Left colon (tissue), 2 donors: ENCODE measurements at regions of chr12 and their contacts with region 1.

Region 1: DNA sequence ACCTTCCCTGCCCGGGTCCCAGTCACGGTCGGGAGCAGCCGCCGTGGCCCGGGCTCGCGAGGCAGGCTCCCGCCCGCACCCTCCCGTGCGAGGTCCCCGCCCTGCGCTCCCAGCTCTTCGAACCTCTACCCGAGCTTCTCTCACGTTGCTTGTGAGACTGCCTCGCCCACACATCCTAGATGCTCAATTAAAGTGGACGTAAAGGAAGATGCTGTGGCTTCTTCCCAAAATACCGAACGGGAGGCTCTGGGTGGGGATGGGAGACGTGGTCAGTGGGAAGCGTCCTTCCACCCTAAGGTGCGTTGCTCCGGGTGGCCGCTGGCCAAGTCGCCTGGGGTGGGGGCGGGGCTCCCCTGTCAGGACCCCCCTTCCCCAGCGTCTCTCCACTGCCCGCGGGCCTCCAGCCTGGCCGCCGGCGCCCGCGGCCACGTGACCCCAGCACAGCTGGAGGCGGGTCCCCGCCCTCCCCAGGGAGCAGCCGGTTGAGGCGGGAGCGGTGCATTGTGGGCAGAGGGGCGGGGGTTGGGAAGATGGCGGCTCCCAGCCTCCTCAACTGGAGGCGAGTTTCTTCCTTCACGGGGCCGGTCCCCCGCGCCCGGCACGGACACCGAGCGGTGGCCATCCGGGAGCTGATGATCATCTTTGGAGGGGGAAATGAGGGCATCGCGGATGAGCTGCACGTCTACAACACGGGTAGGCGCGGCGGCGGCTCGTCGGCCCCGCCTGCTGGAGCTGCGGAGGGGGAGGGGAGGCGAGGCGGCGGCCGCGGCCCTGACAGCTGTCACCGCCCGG is at the start of gene HCFC2:
- DNase-seq: peak; percentile 92 to 94
- ATAC-seq: peak; percentile 98
- total RNA-seq, gene HCFC2: 10.7 to 14.0 TPM

Region 2: GRCh38 chr12:103965590-103966504 is 98.4 kb before region 1 on chr12 and contains the start of gene TDG:
- intact Hi-C with region 1: loop called in 1 of 2 experiments (anchors 10 kb)
- DNase-seq: peak; percentile 96 to 99
- ATAC-seq: peak; percentile 97
- total RNA-seq, gene TDG: 22.7 to 31.6 TPM

Region 3: GRCh38 chr12:104399740-104400612 is 335.7 kb after region 1 on chr12:
- intact Hi-C with region 1: no loop called
- DNase-seq: no peak
- ATAC-seq: no peak